ENCODE measurements at regions of chr14 and their contacts with region 1.

Region 1: DNA sequence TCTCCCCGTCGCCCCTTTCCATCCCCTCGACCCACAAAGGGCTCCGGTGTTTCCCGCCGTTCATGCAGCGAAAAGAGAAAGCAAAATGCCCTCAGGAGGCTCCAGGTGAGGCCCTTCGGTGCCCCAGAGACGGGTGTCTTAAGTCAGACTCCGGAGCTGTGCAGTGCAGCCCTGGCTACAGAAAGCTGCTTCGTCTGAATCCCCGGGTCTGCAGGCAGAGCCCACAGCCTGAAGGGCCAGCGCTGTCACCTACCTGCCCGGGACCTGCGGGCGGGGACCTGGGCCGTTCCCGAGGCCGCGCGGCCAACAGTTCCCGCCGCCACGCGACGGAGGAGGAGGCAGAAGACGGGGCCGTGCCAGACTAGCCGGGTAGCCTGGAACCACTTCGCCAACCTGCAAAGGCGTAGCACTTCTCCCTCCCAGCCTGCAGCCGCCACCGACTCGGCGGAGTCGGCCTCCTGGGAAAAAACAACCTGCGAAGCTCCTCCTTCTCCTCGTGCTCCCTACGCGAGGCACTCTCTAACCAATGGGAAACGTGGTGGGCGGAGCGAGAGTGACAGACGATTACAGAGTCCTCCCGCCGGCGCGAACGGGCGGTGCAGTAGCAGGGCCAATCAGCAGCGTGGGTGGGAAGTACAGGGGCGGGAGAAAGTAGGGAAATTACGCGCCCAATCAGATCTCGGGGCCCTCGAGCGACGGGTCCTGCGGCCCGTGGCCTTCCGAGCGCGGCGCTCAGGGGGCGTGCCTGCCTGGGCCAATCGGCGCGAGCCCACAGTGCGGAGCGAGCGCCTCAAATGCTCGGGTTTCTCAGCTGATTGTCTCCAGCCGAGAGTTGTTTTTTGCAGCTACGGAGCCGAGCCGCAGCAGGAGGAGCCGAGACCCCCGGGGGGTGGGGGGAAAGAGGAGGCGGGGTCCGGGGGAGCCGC is at the starts of genes GPR137C and TXNDC16:
- DNase-seq: peak; percentile 100
- ATAC-seq: peak; percentile 96
- H3K4me3 Mint-ChIP-seq: peak within 1 kb of the TSS; percentile 85
- H3K27ac Mint-ChIP-seq: peak within 1 kb of the TSS; percentile 86
- H3K4me1 Mint-ChIP-seq: peaks cover 18% of the 10 kb centered on the region
- H3K27me3 Mint-ChIP-seq: peaks cover 4% of the 10 kb centered on the region
- total RNA-seq, gene GPR137C: 0.04 to 0.14 TPM
- total RNA-seq, gene TXNDC16: 4.0 to 5.2 TPM

Region 2: DNA sequence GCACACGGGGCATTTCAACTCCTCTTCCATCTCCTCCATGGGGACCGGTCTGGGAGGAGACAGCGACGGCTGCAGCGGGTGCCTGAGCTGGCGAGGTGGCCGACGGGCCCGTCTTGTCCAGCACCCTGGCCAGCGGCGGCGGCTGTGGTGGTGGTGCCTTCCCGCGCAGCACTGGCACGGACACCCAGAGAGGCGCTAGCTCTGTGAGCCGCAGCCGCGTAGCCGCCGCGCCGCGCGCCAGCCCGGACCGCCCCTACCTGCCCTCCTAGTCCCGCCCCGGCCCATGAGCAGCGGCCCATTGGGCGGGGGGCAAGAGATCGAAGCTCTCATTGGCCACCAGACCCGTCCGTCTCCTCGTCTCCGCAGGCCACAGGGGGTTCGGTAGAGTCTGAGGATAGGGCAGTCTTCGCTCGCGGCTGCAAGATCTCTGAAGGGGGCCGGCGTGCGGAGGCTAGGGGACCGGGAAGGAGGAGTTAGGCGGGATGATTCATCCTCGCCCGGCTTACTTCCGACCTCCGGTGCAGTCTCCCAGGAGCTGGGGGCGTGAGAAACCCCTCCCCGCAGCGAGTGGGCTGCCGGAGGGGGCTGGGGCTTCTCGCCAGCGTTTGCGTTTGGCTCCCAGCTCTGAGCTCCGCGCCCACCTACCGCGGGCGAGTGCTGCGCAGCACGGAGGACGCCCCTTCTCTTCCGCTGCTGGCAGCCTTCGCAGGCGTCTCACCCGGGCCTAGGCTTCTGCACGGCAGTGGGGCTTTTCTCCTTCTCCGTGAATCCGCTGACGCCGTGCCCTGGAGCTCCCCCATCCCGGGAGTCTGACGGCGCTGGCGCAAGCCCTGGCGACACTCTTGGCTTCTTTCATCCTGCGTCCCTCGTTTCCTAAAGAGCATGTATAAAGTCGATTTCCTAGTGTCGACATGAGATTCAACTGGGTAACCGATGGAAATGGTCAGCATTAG is 1457.1 kb before region 1 on chr14 and contains the start of gene TRIM9:
- CTCF ChIA-PET with region 1: no interaction called
- POLR2A ChIA-PET with region 1: no interaction called
- intact Hi-C with region 1: loop called in 1 of 2 experiments (anchors 10 kb)
- DNase-seq: peak; percentile 97
- ATAC-seq: peak; percentile 97
- H3K4me3 Mint-ChIP-seq: peak within 1 kb of the TSS; percentile 79
- H3K27ac Mint-ChIP-seq: peak within 1 kb of the TSS; percentile 79
- H3K4me1 Mint-ChIP-seq: peaks cover 15% of the 10 kb centered on the region
- H3K27me3 Mint-ChIP-seq: peaks cover 10% of the 10 kb centered on the region
- total RNA-seq, gene TRIM9: 2.4 TPM

Region 3: DNA sequence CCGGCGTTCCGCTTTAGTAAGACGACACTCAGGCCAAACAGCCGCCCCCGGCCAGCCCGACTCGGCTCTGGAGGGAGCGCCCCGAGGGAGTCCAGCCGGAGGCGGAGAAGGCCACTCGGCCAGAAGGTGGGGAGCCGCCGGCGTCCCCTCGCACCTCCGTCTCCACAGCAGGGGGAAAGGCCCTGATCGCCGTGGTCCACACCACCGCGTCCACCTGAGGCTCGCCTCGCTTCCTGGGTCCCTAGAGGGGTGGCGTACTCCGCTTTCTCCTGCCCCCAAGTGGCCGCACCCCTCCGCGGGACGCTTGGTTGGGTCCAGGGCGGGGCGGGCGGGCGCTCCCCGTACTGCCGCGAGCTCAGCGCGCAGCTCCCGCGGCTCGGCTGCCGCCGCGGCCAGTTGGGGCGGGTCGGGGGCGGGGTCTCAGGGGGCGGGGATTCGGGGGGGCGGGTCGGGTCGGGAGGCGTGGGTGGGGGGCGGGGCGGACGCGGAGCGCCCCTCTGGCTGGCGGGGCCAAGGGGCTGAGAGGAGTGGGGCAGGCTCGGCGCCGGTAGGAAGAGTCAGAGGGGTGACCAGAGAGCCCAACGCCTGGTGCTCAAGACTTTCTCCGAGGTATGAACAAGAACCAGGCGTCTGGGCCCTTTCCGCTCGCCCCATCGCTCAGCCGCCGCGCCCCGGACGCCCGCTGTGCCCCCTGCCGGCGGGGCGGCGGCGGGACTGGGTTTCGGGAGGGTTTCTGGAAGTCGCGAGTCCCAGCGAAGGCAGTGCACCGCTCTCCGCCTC is 900.7 kb before region 1 on chr14 and contains the start of gene FRMD6:
- CTCF ChIA-PET with region 1: no interaction called
- POLR2A ChIA-PET with region 1: no interaction called
- intact Hi-C with region 1: loop called in 1 of 2 experiments (anchors 2 kb)
- DNase-seq: peak; percentile 90
- ATAC-seq: peak; percentile 86
- H3K4me3 Mint-ChIP-seq: peak within 1 kb of the TSS; percentile 80
- H3K27ac Mint-ChIP-seq: peak within 1 kb of the TSS; percentile 79
- H3K4me1 Mint-ChIP-seq: peaks cover 19% of the 10 kb centered on the region
- H3K27me3 Mint-ChIP-seq: peaks cover 12% of the 10 kb centered on the region
- total RNA-seq, gene FRMD6: 7.5 to 8.0 TPM

Region 4: GRCh38 chr14:52313903-52314594 is 238.3 kb before region 1 on chr14 and contains the start of gene PTGER2:
- CTCF ChIA-PET with region 1: no interaction called
- POLR2A ChIA-PET with region 1: interaction called, 7 read pairs
- intact Hi-C with region 1: loop called in 1 of 2 experiments (anchors 5 kb)
- DNase-seq: peak; percentile 83
- ATAC-seq: peak; percentile 62
- H3K4me3 Mint-ChIP-seq: peak within 1 kb of the TSS; percentile 87
- H3K27ac Mint-ChIP-seq: peak within 1 kb of the TSS; percentile 80
- H3K4me1 Mint-ChIP-seq: peaks cover 50% of the 10 kb centered on the region
- H3K27me3 Mint-ChIP-seq: peaks cover 53% of the 10 kb centered on the region
- total RNA-seq, gene PTGER2: 2.4 TPM

Region 5: GRCh38 chr14:52695481-52696091 is 143.3 kb after region 1 on chr14 and contains the start of gene ERO1A:
- CTCF ChIA-PET with region 1: no interaction called
- POLR2A ChIA-PET with region 1: no interaction called
- intact Hi-C with region 1: loop called (anchors 1 kb)
- DNase-seq: peak; percentile 89
- ATAC-seq: peak; percentile 82
- H3K4me3 Mint-ChIP-seq: peak within 1 kb of the TSS; percentile 88
- H3K27ac Mint-ChIP-seq: peak within 1 kb of the TSS; percentile 98
- H3K4me1 Mint-ChIP-seq: peaks cover 33% of the 10 kb centered on the region
- H3K27me3 Mint-ChIP-seq: no peaks in the 10 kb centered on the region
- total RNA-seq, gene ERO1A: 120 to 165 TPM

Region 6: DNA sequence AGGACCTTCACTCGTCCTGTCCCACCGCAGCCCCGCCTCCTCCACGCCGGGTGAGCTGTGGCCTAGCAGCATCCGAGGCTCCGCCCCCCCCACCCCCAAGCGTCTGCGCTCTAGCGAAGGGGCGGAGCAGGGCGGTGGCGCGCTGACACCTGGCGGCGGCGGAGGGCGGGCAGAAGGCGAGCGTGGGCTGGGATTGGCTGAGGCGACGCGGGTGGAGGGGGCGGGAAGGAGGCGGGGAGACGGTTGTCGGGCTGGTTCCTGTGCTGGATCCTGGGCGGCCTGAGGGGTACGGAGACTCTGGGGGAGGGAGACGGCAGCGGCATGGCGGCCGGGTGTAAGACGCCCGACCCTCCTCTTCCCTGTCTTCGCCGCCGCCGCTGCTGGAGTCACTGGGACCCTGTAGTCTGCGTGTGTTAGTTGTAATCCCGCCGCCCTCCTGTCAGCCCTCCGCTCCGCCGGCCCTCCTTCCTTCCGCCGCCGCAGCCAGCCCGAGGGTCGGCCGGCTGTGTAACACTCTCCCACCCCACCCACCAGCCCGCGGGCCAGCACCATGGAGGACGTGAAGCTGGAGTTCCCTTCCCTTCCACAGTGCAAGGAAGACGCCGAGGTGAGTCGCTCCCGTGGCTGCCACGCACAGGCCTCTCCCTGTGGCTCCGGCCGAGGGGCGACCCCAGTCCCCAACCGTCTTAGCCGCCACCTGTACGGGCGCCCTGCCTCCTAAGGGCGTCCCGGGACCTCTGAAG is 177.8 kb after region 1 on chr14 and contains the start of gene STYX:
- CTCF ChIA-PET with region 1: no interaction called
- POLR2A ChIA-PET with region 1: no interaction called
- intact Hi-C with region 1: loop called (anchors 1 kb)
- DNase-seq: peak; percentile 99
- ATAC-seq: peak; percentile 97
- H3K4me3 Mint-ChIP-seq: peak within 1 kb of the TSS; percentile 93
- H3K27ac Mint-ChIP-seq: peak within 1 kb of the TSS; percentile 90
- H3K4me1 Mint-ChIP-seq: peaks cover 33% of the 10 kb centered on the region
- H3K27me3 Mint-ChIP-seq: no peaks in the 10 kb centered on the region
- total RNA-seq, gene STYX: 13.1 to 13.3 TPM

Region 7: DNA sequence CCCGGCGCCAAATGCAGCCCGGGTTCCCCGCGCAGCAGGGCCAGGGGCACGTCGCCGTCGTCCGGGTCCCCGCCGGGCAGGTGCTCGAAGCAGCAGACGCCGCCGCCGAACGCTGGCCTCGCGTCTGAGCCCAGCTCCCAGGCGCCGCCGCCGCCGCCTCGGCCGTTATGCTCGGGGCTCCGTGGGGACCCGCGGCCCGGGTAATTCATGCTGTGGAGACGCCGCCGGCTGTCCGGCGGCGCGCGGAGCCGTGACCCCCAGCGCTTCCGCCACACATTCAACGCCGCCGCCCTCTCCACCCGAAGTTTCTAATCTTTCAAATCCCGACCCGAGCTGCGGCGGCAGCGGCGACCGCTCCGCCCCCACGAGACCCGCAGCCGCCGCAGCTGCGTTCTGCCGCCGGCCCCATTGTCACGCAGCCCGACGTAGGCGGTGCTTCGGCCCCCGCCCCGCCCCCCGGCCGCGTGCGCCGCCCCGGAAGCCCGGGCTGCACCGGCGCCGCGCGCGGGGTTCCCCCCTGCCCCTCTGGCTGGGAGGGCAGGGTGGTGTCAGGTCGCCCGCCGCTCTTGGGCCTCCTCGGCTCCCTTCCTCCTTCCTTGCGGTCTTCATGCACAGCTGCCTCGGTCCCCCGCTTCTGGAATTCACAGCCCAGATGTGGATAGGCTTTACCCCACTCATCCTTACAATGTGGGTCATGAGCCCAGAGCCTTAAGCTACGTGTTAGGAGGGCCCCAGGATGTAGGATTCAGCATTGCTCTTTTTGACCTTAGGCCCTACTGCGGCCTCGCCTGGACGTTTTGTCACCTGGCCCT is 600.8 kb after region 1 on chr14 and contains the start of gene DDHD1:
- CTCF ChIA-PET with region 1: no interaction called
- POLR2A ChIA-PET with region 1: no interaction called
- intact Hi-C with region 1: loop called in 1 of 2 experiments (anchors 1 kb)
- DNase-seq: peak; percentile 90
- ATAC-seq: peak; percentile 79
- H3K4me3 Mint-ChIP-seq: peak within 1 kb of the TSS; percentile 99
- H3K27ac Mint-ChIP-seq: peak within 1 kb of the TSS; percentile 99
- H3K4me1 Mint-ChIP-seq: peaks cover 34% of the 10 kb centered on the region
- H3K27me3 Mint-ChIP-seq: no peaks in the 10 kb centered on the region
- total RNA-seq, gene DDHD1: 34.7 to 36.2 TPM

Measured in activated CD4-positive, alpha-beta T cell treated with anti-CD3 and anti-CD28 coated beads for 36 hours (primary cell).